Naive thymus-derived CD4-positive, alpha-beta T cell (primary cell): ENCODE measurements at regions of chr1 and their contacts with region 1.

Region 1: GRCh38 chr1:198520524-198521254 is 19.8 kb downstream of the ATP6V1G3 start:
- DNase-seq: peak in 3 of 9 donors; percentile 11 to 27 (median 18)
- ATAC-seq: peak; percentile 66
- H3K4me3 ChIP-seq: peak overlapping the region; percentile 44
- H3K4me3 Mint-ChIP-seq: peak overlapping the region; percentile 65 to 79 (median 71)
- H3K27ac ChIP-seq: peak overlapping the region; percentile 81
- H3K27ac Mint-ChIP-seq: peak overlapping the region; percentile 48 to 95 (median 93)
- H3K4me1 ChIP-seq: peaks cover 40 to 48% of the 10 kb centered on the region in 2 donors
- H3K4me1 Mint-ChIP-seq: peaks cover 30 to 77% (median 69%) of the 10 kb centered on the region in 7 donors
- H3K27me3 ChIP-seq: no peaks in the 10 kb centered on the region
- H3K27me3 Mint-ChIP-seq: no peaks in the 10 kb centered on the region

Region 2: DNA sequence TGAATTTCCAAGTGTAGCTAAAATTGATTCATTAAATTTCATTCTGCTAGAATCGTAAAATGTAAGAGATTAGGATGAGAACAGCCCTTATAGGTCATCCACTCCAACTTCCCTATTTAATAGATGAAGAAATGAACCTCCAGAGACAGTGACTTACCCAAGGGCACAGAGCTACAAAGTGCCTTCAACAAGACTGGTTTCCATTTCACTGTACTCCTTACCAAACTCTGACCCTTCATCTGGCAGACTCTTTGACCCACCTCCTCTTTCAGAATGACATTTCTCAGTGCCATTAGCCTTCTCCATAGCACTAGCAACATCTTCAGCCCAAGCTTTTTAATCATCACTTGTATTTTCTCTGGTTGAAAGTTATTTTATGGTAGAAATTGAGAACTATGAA is 202.6 kb before region 1 on chr1:
- CTCF ChIA-PET with region 1: no interaction called
- POLR2A ChIA-PET with region 1: no interaction called
- intact Hi-C with region 1: no loop called
- DNase-seq: no peak
- ATAC-seq: no peak
- H3K4me3 ChIP-seq: no peak overlapping the region
- H3K4me3 Mint-ChIP-seq: no peak overlapping the region
- H3K27ac ChIP-seq: no peak overlapping the region
- H3K27ac Mint-ChIP-seq: peak overlapping the region in 2 of 9 donors; percentile 16 to 19
- H3K4me1 ChIP-seq: no peaks in the 10 kb centered on the region
- H3K4me1 Mint-ChIP-seq: peaks cover 9 to 23% (median 18%) of the 10 kb centered on the region in 7 donors
- H3K27me3 ChIP-seq: no peaks in the 10 kb centered on the region
- H3K27me3 Mint-ChIP-seq: no peaks in the 10 kb centered on the region

Region 3: GRCh38 chr1:198556971-198557370 is 36.3 kb after region 1 on chr1:
- CTCF ChIA-PET with region 1: interaction called, 4 read pairs
- POLR2A ChIA-PET with region 1: interaction called, 6 read pairs
- intact Hi-C with region 1: loop called (anchors 1 to 5 kb)
- DNase-seq: peak; percentile 12 to 90 (median 82)
- ATAC-seq: peak; percentile 95
- H3K4me3 ChIP-seq: peak overlapping the region; percentile 21
- H3K4me3 Mint-ChIP-seq: peak overlapping the region; percentile 63 to 89 (median 74)
- H3K27ac ChIP-seq: peak overlapping the region; percentile 59
- H3K27ac Mint-ChIP-seq: peak overlapping the region; percentile 51 to 95 (median 87)
- H3K4me1 ChIP-seq: peaks cover 65 to 71% of the 10 kb centered on the region in 2 donors
- H3K4me1 Mint-ChIP-seq: peaks cover 52 to 94% (median 89%) of the 10 kb centered on the region in 7 donors
- H3K27me3 ChIP-seq: no peaks in the 10 kb centered on the region
- H3K27me3 Mint-ChIP-seq: no peaks in the 10 kb centered on the region

Region 4: DNA sequence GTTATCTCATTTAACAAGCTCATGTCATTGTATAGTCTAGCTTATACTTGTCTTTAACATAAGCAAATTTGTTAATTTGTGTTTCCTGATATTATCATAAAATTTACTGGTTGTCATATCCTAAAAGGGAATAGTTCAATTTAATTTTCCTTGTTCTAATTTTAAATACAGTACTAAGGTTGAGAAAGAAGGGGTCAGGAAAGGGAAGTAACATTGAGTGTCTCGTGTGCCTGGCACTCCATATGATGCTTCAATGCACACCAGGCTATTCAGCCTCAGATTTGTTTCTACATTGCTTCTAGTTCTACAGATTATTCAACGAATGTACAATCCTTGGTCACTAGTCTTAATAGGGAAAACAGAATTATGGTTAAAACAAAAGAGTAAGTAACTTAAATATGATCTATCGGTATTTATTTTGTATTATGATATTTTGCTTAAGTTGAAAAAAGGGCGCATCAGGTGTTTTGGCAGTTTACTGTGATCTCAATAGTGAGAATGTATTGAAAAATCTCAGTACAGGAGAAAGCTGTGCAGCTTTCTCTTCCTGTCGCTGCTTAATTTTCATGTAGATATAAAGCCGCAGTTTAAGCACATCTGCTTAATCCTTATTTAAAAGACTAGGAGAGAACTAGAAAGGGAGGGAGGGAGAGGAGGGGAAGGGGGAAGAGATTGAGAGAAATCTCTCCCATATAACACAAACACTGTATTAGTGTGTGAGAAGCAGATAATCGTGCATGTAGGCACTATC is 131.1 kb after region 1 on chr1:
- CTCF ChIA-PET with region 1: interaction called, 6 read pairs
- POLR2A ChIA-PET with region 1: interaction called, 17 read pairs
- intact Hi-C with region 1: loop called in 1 of 2 experiments (anchors 1 kb)
- DNase-seq: no peak
- ATAC-seq: peak; percentile 34
- H3K4me3 ChIP-seq: peak overlapping the region; percentile 41
- H3K4me3 Mint-ChIP-seq: peak overlapping the region; percentile 77 to 92 (median 84)
- H3K27ac ChIP-seq: peak overlapping the region; percentile 94
- H3K27ac Mint-ChIP-seq: peak overlapping the region; percentile 83 to 98 (median 98)
- H3K4me1 ChIP-seq: peaks cover 62% of the 10 kb centered on the region in 2 donors
- H3K4me1 Mint-ChIP-seq: peaks cover 47 to 93% (median 73%) of the 10 kb centered on the region in 7 donors
- H3K27me3 ChIP-seq: no peaks in the 10 kb centered on the region
- H3K27me3 Mint-ChIP-seq: no peaks in the 10 kb centered on the region

Region 5: DNA sequence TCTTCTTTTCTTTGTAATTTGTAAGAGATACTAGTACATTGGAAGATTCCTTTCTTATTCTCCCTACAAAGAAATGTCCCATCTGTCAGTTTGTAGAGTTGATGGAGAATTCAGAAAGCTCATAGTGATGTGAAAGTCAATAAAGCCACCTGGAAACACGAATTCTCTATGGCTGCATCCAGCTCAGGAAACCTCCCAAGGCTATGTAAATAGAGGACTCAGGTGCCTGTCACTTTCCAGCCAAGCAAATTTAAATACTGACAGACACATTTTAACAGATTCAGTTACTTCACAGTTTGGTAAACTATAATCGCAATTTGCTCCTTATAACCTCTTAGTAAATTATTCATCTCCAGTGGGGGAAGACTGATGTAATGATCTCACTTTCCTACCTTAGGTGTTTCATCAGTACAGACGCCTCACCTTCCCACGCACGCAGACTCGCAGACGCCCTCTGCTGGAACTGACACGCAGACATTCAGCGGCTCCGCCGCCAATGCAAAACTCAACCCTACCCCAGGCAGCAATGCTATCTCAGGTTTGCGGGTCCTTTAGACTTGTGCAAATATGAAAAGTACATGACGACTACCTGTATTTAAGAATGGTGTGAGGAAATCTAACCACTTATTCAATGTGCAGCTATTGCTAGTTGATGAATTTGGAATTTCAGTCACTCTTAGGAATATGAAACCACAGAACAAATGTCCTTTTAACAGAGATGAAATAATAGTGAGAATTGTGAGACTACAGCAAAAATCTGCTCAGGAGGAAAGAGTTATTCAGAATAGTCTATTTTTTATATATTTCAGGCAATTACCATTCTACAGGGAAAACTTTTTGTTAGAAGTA is 178.7 kb after region 1 on chr1:
- CTCF ChIA-PET with region 1: interaction called, 7 read pairs
- POLR2A ChIA-PET with region 1: interaction called, 5 read pairs
- intact Hi-C with region 1: loop called in 1 of 2 experiments (anchors 1 kb)
- DNase-seq: peak; percentile 34 to 68 (median 64)
- ATAC-seq: peak; percentile 84
- H3K4me3 ChIP-seq: no peak overlapping the region
- H3K4me3 Mint-ChIP-seq: peak overlapping the region; percentile 13 to 68 (median 40)
- H3K27ac ChIP-seq: peak overlapping the region; percentile 46
- H3K27ac Mint-ChIP-seq: peak overlapping the region; percentile 50 to 93 (median 87)
- H3K4me1 ChIP-seq: peaks cover 42 to 52% of the 10 kb centered on the region in 2 donors
- H3K4me1 Mint-ChIP-seq: peaks cover 46 to 97% (median 88%) of the 10 kb centered on the region in 7 donors
- H3K27me3 ChIP-seq: no peaks in the 10 kb centered on the region
- H3K27me3 Mint-ChIP-seq: no peaks in the 10 kb centered on the region